CD4-positive, alpha-beta memory T cell (primary cell): ENCODE measurements at regions of chr3 and their contacts with region 1.

Region 1: GRCh38 chr3:157522648-157523047 is 19.4 kb upstream of the VEPH1 start:
- DNase-seq: no peak
- H3K4me3 ChIP-seq: no peak overlapping the region
- H3K4me3 Mint-ChIP-seq: no peak overlapping the region
- H3K27ac ChIP-seq: no peak overlapping the region
- H3K27ac Mint-ChIP-seq: no peak overlapping the region
- H3K4me1 ChIP-seq: no peaks in the 10 kb centered on the region
- H3K4me1 Mint-ChIP-seq: no peaks in the 10 kb centered on the region
- H3K27me3 ChIP-seq: no peaks in the 10 kb centered on the region
- H3K27me3 Mint-ChIP-seq: peaks cover 0 to 1% of the 10 kb centered on the region in 2 donors

Region 2: GRCh38 chr3:157532529-157533297 is 10.1 kb after region 1 on chr3:
- CTCF ChIA-PET with region 1: interaction called, 11 read pairs
- POLR2A ChIA-PET with region 1: no interaction called
- intact Hi-C with region 1: no loop called
- DNase-seq: peak in 4 of 5 donors; percentile 4 to 10 (median 6)
- H3K4me3 ChIP-seq: no peak overlapping the region
- H3K4me3 Mint-ChIP-seq: no peak overlapping the region
- H3K27ac ChIP-seq: no peak overlapping the region
- H3K27ac Mint-ChIP-seq: no peak overlapping the region
- H3K4me1 ChIP-seq: no peaks in the 10 kb centered on the region
- H3K4me1 Mint-ChIP-seq: no peaks in the 10 kb centered on the region
- H3K27me3 ChIP-seq: no peaks in the 10 kb centered on the region
- H3K27me3 Mint-ChIP-seq: peaks cover 0 to 1% of the 10 kb centered on the region in 2 donors